Activated T-helper 2 cell treated with anti-CD3 and anti-CD28 coated beads, Interferon-gamma antibody, Interleukin-2, Interleukin-4, amounts not matched to agents 10 μg/mL and 5 μg/mL and 100 μg/mL, durations not matched to agents 14 hours and 24 hours and 36 hours (primary cell): ENCODE measurements at regions of chr3 and their contacts with region 1.

Region 1: DNA sequence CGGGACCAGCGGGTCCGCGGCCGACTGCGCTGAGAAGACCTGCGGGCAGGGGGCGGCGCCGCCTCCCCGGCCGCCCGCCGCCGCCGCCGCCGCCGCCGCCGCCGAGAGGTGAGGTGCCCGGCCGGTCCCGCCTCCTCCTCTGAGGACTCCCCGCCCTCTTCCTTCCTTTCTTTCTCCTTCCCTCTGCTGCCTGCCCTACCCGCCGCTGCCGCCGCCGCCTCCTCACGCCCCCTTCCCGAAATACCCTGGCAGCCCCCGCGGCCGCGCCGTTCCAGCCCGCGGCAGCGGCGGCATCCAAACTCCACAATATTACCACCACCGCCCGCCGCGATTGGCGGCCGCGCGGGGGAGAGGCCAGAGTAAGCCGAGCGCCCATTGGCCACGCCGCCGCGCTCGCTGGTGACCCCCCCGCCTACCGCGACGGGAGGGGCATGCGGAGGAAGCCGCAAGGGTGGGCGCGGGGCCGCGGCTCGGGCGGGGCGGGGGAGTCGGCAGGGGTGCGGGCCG is 61.8 kb upstream of the ANKRD28 start:
- DNase-seq: peak; percentile 73
- H3K4me3 Mint-ChIP-seq: peak overlapping the region; percentile 94
- H3K27ac Mint-ChIP-seq: peak overlapping the region; percentile 96
- H3K4me1 Mint-ChIP-seq: peaks cover 36% of the 10 kb centered on the region
- H3K27me3 Mint-ChIP-seq: no peaks in the 10 kb centered on the region

Region 2: DNA sequence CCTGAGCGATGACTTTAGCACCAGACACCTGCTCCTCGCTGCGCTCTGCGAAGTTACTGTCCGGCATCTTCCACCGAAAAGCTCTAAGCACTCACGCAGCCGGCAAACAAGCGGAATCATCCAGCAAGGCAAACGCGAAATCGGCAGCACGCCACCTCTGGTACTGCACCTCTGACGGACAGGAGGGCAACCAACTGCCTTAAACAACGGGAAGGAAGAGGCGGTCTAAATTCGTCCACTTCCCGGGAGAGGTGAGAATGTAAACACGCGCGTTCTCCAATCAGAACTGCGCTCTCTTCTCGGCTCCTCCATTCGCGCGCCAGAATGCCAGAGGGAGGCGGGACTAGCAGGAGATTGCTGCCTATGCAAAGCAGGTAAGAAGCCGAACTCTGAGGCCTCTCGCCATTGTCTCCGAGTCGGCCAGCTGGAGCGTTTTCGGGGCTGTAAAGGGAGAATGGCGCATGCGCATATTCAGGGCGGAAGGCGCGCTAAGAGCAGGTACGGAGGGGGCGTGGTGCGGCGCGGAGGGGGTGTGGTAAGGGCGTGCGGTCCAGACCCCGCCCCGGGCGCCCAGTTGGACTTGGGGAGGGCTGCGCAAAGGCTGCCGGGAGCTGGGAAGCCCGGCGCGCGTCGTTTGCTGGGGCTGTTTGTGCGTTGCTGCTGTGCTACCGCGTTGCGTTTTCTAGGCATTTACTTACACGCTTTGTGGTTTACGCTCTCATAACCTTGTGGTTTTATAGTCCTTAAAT is 258.0 kb before region 1 on chr3 and contains the starts of genes BTD and HACL1:
- intact Hi-C with region 1: loop called (anchors 2 kb)
- DNase-seq: peak; percentile 99
- H3K4me3 Mint-ChIP-seq: peak within 1 kb of the TSS; percentile 100
- H3K27ac Mint-ChIP-seq: peak within 1 kb of the TSS; percentile 99
- H3K4me1 Mint-ChIP-seq: peaks cover 28% of the 10 kb centered on the region
- H3K27me3 Mint-ChIP-seq: no peaks in the 10 kb centered on the region
- total RNA-seq, gene BTD: 3.9 and 4.8 TPM in 2 replicates
- total RNA-seq, gene HACL1: 22.8 TPM in 2 replicates

Region 3: GRCh38 chr3:16247276-16248061 is 387.9 kb after region 1 on chr3:
- intact Hi-C with region 1: loop called (anchors 5 kb)
- DNase-seq: peak; percentile 67
- H3K4me3 Mint-ChIP-seq: no peak overlapping the region
- H3K27ac Mint-ChIP-seq: no peak overlapping the region
- H3K4me1 Mint-ChIP-seq: peaks cover 18% of the 10 kb centered on the region
- H3K27me3 Mint-ChIP-seq: no peaks in the 10 kb centered on the region